Common myeloid progenitor, CD34-positive (primary cell): ENCODE measurements at regions of chr12 and their contacts with region 1.

Region 1: GRCh38 chr12:57865090-57865751 is 18.7 kb upstream of the CTDSP2 start:
- DNase-seq: peak in 2 of 3 donors; percentile 50 to 63
- H3K4me3 ChIP-seq: peak overlapping the region; percentile 23 to 76 (median 57)
- H3K27ac ChIP-seq: peak overlapping the region in 1 of 2 experiments; percentile 46
- H3K4me1 ChIP-seq: peaks cover 0 to 10% (median 6%) of the 10 kb centered on the region in 4 experiments
- H3K27me3 ChIP-seq: peaks cover 0 to 3% (median 0%) of the 10 kb centered on the region in 5 experiments

Region 2: GRCh38 chr12:57846577-57847319 is 18.5 kb before region 1 on chr12 and contains the start of gene CTDSP2:
- CTCF ChIA-PET with region 1: interaction called, 13 read pairs
- POLR2A ChIA-PET with region 1: interaction called, 3 read pairs
- DNase-seq: peak; percentile 92 to 96 (median 92)
- H3K4me3 ChIP-seq: peak within 1 kb of the TSS; percentile 89 to 99 (median 93)
- H3K27ac ChIP-seq: peak within 1 kb of the TSS; percentile 74 to 92
- H3K4me1 ChIP-seq: peaks cover 27 to 54% (median 45%) of the 10 kb centered on the region in 4 experiments
- H3K27me3 ChIP-seq: no peaks in the 10 kb centered on the region

Region 3: GRCh38 chr12:57852620-57853500 is 12.4 kb before region 1 on chr12:
- CTCF ChIA-PET with region 1: interaction called, 16 read pairs
- POLR2A ChIA-PET with region 1: interaction called, 3 read pairs
- DNase-seq: peak in 1 of 3 donors; percentile 45
- H3K4me3 ChIP-seq: peak overlapping the region; percentile 20 to 76 (median 48)
- H3K27ac ChIP-seq: no peak overlapping the region
- H3K4me1 ChIP-seq: peaks cover 7 to 43% (median 36%) of the 10 kb centered on the region in 4 experiments
- H3K27me3 ChIP-seq: no peaks in the 10 kb centered on the region

Region 4: DNA sequence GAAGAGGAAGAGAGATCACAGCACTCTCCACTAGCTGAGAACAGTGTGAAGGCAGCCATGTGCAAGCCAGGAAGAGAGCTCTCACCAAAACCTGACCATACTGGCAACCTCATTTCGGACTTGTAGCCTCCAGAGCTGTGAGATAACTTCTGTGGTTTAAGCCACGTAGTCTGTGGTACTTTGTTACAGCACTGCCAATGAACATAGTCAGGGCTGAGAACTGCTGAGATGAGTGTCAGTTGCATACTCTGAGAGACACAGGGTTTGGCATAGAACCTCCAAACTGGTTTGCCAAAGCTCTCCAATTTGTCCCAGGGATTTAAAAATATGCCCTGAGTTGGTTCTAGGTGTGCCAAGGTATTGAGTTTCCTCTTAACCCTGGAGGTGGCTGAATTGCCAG is 294.7 kb after region 1 on chr12:
- CTCF ChIA-PET with region 1: no interaction called
- POLR2A ChIA-PET with region 1: no interaction called
- DNase-seq: no peak
- H3K4me3 ChIP-seq: no peak overlapping the region
- H3K27ac ChIP-seq: no peak overlapping the region
- H3K4me1 ChIP-seq: no peaks in the 10 kb centered on the region
- H3K27me3 ChIP-seq: peaks cover 0 to 4% (median 0%) of the 10 kb centered on the region in 5 experiments